MCF 10A (cell line): ENCODE measurements at regions of chr1 and their contacts with region 1.

Region 1: DNA sequence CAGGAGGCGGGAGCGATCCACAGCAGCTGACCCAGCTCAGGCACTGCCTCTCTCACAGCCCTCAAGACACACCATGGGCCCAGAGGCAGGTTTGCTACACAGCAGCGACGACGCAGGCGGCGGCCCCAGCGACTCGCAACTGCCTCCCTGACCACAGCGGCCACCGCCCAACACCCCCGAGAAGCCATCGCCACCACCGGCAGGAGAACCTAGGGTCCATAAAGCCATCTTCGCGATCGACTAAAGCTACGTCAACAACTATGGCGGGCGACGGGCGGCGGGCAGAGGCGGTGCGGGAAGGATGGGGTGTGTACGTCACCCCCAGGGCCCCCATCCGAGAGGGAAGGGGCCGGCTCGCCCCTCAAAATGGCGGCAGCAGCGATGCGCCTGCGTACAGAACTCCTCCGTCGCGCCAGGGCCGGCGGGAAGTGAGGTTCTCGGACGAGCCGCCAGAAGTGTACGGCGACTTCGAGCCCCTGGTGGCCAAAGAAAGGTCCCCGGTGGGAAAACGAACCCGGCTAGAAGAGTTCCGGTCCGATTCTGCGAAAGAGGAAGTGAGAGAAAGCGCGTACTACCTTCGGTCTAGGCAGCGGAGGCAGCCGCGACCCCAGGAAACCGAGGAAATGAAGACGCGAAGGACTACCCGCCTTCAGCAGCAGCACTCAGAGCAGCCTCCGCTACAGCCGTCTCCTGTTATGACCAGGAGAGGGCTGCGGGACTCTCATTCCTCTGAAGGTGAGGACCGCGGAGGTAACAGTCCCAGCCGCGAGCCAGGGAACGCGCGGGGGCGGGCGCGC is at the start of gene TOR1AIP1:
- DNase-seq: peak; percentile 99
- H3K4me3 Mint-ChIP-seq: peak within 1 kb of the TSS; percentile 93
- H3K27ac Mint-ChIP-seq: peak within 1 kb of the TSS; percentile 100
- H3K4me1 Mint-ChIP-seq: peaks cover 43% of the 10 kb centered on the region
- H3K27me3 Mint-ChIP-seq: no peaks in the 10 kb centered on the region
- CTCF ChIP-seq: peak; percentile 39
- total RNA-seq, gene TOR1AIP1: 52.4 and 53.7 TPM in 2 replicates

Region 2: GRCh38 chr1:179867807-179868330 is 14.6 kb before region 1 on chr1:
- CTCF ChIA-PET with region 1: interaction called, 7 read pairs
- POLR2A ChIA-PET with region 1: interaction called, 41 read pairs
- intact Hi-C with region 1: no loop called
- DNase-seq: peak; percentile 79
- H3K4me3 Mint-ChIP-seq: no peak overlapping the region
- H3K27ac Mint-ChIP-seq: no peak overlapping the region
- H3K4me1 Mint-ChIP-seq: peaks cover 34% of the 10 kb centered on the region
- H3K27me3 Mint-ChIP-seq: no peaks in the 10 kb centered on the region
- CTCF ChIP-seq: peak; percentile 81

Region 3: DNA sequence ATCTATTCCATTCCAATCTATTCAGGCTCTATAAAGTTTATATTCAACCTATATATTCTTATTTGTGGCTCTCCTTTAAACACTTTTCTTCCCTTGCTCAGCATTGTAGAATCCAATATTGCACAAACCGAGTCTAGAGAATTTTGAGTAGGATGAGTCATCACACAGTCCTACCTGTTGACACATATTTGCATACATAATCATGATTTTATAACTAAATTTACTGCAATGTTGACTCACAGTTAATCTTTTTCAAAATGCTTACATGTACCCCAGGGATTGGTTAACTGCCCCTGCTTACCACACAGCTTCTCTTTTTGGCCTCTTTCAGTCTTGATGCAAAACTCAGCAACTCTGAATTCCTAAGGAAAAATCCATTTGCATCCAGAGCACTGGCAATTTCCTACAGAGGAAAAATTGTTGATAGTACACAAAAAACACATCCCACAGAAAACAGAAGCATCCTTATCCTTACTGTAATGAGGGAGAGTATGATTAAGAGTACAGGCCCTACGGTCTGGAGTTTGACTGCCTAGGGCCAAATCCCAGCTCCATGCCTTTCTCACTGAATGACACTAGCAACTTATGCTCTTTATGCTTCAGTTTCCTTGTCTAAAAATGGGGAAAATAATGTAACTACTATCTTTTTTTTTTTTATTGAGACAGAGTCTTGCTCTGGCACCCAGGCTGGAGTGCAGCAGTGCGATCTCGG is 44.2 kb after region 1 on chr1:
- CTCF ChIA-PET with region 1: interaction called, 6 read pairs
- POLR2A ChIA-PET with region 1: interaction called, 71 read pairs
- intact Hi-C with region 1: no loop called
- DNase-seq: peak; percentile 90
- H3K4me3 Mint-ChIP-seq: no peak overlapping the region
- H3K27ac Mint-ChIP-seq: peak overlapping the region; percentile 91
- H3K4me1 Mint-ChIP-seq: peaks cover 17% of the 10 kb centered on the region
- H3K27me3 Mint-ChIP-seq: no peaks in the 10 kb centered on the region
- CTCF ChIP-seq: no peak

Region 4: GRCh38 chr1:180027949-180028445 is 145.6 kb after region 1 on chr1:
- CTCF ChIA-PET with region 1: interaction called, 3 read pairs
- POLR2A ChIA-PET with region 1: interaction called, 17 read pairs
- intact Hi-C with region 1: loop called (anchors 5 kb)
- DNase-seq: peak; percentile 90
- H3K4me3 Mint-ChIP-seq: no peak overlapping the region
- H3K27ac Mint-ChIP-seq: peak overlapping the region; percentile 69
- H3K4me1 Mint-ChIP-seq: peaks cover 22% of the 10 kb centered on the region
- H3K27me3 Mint-ChIP-seq: no peaks in the 10 kb centered on the region
- CTCF ChIP-seq: no peak

Region 5: DNA sequence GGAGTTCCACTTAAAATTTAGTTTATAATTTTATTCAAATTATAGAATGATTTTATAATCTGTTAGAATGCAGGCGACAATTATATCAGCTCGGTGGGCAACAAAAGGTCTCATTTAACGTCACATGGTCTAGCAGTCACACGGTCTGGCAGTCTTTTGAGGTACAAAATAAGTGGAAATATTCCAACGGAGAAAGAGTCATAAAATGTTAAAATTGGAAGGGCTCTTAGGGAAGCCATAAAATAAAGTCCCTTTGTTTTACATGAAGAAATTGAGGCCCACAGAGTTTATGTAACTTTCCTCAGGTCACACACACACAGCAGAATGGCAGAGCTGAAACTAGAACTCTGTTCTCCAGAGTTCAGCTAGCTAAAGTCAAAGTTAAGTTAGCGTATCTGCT is 187.8 kb after region 1 on chr1:
- CTCF ChIA-PET with region 1: no interaction called
- POLR2A ChIA-PET with region 1: no interaction called
- intact Hi-C with region 1: no loop called
- DNase-seq: no peak
- H3K4me3 Mint-ChIP-seq: no peak overlapping the region
- H3K27ac Mint-ChIP-seq: no peak overlapping the region
- H3K4me1 Mint-ChIP-seq: no peaks in the 10 kb centered on the region
- H3K27me3 Mint-ChIP-seq: no peaks in the 10 kb centered on the region
- CTCF ChIP-seq: no peak

Region 6: DNA sequence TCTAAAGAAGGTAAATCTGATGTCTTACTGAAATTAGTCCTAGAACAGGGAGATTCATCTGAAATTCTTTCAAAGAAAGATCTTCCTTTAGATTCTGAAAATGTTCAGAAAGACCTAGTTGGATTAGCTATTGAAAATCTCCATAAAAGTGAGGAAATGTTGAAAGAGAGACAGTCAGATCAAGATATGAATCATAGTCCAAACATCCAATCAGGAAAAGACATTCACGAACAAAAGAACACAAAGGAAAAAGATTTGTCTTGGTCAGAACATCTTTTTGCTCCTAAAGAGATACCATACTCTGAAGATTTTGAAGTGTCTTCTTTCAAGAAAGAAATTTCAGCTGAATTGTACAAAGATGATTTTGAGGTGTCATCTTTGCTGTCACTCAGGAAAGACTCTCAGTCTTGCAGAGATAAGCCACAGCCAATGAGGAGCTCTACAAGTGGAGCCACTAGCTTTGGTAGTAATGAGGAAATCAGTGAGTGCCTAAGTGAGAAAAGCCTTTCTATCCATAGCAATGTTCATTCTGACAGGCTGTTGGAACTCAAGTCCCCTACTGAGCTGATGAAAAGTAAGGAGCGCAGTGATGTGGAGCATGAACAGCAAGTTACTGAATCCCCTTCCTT is 210.6 kb after region 1 on chr1:
- CTCF ChIA-PET with region 1: no interaction called
- POLR2A ChIA-PET with region 1: interaction called, 3 read pairs
- intact Hi-C with region 1: loop called (anchors 5 kb)
- DNase-seq: peak; percentile 16
- H3K4me3 Mint-ChIP-seq: no peak overlapping the region
- H3K27ac Mint-ChIP-seq: peak overlapping the region; percentile 42
- H3K4me1 Mint-ChIP-seq: peaks cover 7% of the 10 kb centered on the region
- H3K27me3 Mint-ChIP-seq: no peaks in the 10 kb centered on the region
- CTCF ChIP-seq: no peak

Region 7: GRCh38 chr1:180168786-180169639 is 286.6 kb after region 1 on chr1:
- CTCF ChIA-PET with region 1: interaction called, 3 read pairs
- POLR2A ChIA-PET with region 1: interaction called, 13 read pairs
- intact Hi-C with region 1: loop called (anchors 2 kb)
- DNase-seq: peak; percentile 69
- H3K4me3 Mint-ChIP-seq: no peak overlapping the region
- H3K27ac Mint-ChIP-seq: peak overlapping the region; percentile 77
- H3K4me1 Mint-ChIP-seq: peaks cover 29% of the 10 kb centered on the region
- H3K27me3 Mint-ChIP-seq: no peaks in the 10 kb centered on the region
- CTCF ChIP-seq: peak; percentile 47

Region 8: DNA sequence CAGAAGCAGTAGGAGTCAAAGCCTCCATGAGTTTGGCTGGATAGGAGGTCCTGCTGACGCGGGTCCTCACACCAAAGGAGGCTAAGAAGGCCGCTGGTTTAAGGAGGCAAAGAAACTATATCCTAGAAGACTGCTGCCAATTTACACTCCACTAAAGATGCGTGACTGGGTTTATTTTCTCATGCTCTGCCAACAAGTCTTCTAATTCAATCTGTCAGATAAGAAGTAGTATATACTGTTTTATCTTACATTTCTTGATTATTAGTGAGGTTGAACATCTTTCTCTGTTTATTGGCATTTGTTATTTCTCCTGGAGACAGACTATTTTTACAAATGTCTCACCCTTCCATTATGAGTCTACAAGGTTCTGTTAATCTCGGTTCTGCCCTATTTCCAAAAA is 585.9 kb after region 1 on chr1:
- CTCF ChIA-PET with region 1: no interaction called
- POLR2A ChIA-PET with region 1: no interaction called
- intact Hi-C with region 1: loop called (anchors 10 kb)
- DNase-seq: no peak
- H3K4me3 Mint-ChIP-seq: no peak overlapping the region
- H3K27ac Mint-ChIP-seq: no peak overlapping the region
- H3K4me1 Mint-ChIP-seq: no peaks in the 10 kb centered on the region
- H3K27me3 Mint-ChIP-seq: no peaks in the 10 kb centered on the region
- CTCF ChIP-seq: no peak